Dorsolateral prefrontal cortex (tissue), 120 donors: ENCODE measurements at regions of chr10 and their contacts with region 1.

Region 1: DNA sequence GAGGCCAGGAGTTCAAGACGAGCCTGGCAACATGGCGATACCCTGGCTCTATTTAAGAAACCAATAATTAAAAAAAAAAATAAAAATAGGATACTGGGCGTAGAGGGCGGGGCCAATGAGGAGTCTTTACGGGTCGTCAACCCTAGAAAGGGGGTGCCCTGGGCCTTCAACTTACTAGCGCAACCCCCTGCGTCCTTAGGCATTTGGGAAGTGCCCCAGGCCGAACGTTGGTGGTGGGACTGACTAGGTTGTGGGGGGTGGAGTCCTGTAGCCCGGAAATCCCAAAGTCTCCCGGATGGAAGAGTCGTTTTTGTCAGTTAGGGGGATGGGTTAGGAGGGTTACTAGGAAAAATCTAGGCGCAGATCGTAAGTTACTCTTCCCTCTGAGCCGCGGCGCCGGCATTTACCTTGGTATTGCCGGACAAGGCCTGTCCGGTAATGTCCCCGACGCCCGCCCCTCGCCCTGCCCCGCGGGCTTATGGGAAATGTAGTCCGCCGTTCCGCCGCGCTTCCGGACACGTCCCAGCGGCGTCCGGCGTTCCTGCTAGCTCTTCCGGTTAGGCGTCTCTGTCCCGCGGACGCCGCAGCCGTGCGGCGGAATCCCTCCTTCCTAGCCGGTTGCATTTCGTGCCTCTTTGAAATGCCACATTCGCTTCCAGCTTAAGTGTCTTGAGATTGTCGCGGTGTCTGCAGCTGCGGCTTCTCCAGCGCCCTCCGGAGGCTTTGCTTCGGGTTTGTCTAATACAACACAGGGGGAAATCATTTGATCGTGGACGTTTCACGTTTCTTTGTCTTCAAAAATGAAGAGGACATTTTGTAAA is 1.3 kb upstream of the ACBD5 start:
- DNase-seq: peak; percentile 73 to 93 (median 88)
- H3K4me3 ChIP-seq: peak overlapping the region; percentile 50 to 95 (median 85)
- H3K27ac ChIP-seq: peak overlapping the region; percentile 72 to 99 (median 97)
- H3K27me3 ChIP-seq: no peaks in the 10 kb centered on the region
- CTCF ChIP-seq: peak in 53 of 56 donors; percentile 1 to 67 (median 48)

Region 2: DNA sequence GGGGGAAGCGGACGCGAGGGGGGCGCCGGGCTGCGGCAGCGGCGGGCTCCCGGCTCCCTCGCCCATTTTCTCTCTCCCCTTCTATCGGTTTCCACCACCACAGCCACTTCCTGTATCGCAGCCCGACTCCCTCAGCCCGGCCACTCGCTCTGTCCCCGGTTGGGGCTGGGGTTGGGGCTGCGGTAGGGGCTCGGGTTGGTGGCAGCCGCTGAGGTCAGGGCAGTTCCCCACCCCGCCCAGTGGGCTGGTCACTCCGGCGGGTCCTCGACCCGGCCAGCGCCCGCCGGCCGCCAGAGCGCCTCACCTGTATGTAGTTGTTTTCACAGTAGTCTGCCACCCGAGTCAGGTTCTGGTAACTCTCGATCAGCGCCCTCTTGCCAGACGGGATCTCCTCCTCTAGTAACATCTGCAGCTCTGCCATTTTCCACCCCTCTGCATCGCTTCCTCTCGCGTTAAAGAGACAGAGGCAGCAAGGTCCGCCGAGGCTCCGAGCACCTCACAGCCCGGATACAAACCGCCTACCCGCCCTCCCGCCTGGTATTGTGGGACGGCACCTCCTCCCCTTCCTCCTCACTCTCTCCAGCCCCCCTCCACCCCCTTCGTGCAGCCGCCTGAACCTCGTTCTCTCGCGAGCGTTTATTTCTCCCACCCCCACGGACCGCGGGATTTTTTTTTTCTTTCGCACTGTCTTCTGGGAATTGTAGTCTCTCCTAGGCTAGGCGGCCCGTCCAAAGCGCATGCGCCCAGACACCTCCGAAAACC is 381.2 kb before region 1 on chr10 and contains the start of gene ABI1:
- intact Hi-C with region 1: loop called (anchors 2 to 5 kb)
- DNase-seq: peak; percentile 92 to 97 (median 96)
- H3K4me3 ChIP-seq: peak within 1 kb of the TSS; percentile 55 to 100 (median 95)
- H3K27ac ChIP-seq: peak within 1 kb of the TSS; percentile 58 to 98 (median 93)
- H3K27me3 ChIP-seq: no peaks in the 10 kb centered on the region
- CTCF ChIP-seq: no peak
- total RNA-seq, gene ABI1: 47.5 to 104 (median 81.1) TPM

Region 3: GRCh38 chr10:27099916-27100812 is 141.7 kb before region 1 on chr10 and contains the start of gene ANKRD26:
- intact Hi-C with region 1: loop called (anchors 5 kb)
- DNase-seq: peak; percentile 91 to 96 (median 94)
- H3K4me3 ChIP-seq: peak within 1 kb of the TSS; percentile 64 to 97 (median 86)
- H3K27ac ChIP-seq: peak within 1 kb of the TSS; percentile 55 to 98 (median 91)
- H3K27me3 ChIP-seq: no peaks in the 10 kb centered on the region
- CTCF ChIP-seq: peak in 33 of 56 donors; percentile 4 to 57 (median 37)
- total RNA-seq, gene ANKRD26: 18.9 to 64.2 (median 34.3) TPM

Region 4: GRCh38 chr10:27155066-27155754 is 86.7 kb before region 1 on chr10 and contains the start of gene MASTL:
- intact Hi-C with region 1: loop called (anchors 1 to 2 kb)
- DNase-seq: peak; percentile 82 to 95 (median 90)
- H3K4me3 ChIP-seq: peak within 1 kb of the TSS; percentile 69 to 100 (median 96)
- H3K27ac ChIP-seq: peak within 1 kb of the TSS; percentile 87 to 100 (median 98)
- H3K27me3 ChIP-seq: no peaks in the 10 kb centered on the region
- CTCF ChIP-seq: peak in 5 of 56 donors; percentile 5 to 21 (median 11)
- total RNA-seq, gene MASTL: 2.5 to 7.8 (median 5.4) TPM

Region 5: GRCh38 chr10:27192284-27192683 is 49.6 kb before region 1 on chr10:
- intact Hi-C with region 1: no loop called
- DNase-seq: peak in 3 of 10 donors; percentile 7 to 62 (median 48)
- H3K4me3 ChIP-seq: no peak overlapping the region
- H3K27ac ChIP-seq: peak overlapping the region in 3 of 59 donors; percentile 17 to 33 (median 24)
- H3K27me3 ChIP-seq: no peaks in the 10 kb centered on the region
- CTCF ChIP-seq: no peak

Region 6: DNA sequence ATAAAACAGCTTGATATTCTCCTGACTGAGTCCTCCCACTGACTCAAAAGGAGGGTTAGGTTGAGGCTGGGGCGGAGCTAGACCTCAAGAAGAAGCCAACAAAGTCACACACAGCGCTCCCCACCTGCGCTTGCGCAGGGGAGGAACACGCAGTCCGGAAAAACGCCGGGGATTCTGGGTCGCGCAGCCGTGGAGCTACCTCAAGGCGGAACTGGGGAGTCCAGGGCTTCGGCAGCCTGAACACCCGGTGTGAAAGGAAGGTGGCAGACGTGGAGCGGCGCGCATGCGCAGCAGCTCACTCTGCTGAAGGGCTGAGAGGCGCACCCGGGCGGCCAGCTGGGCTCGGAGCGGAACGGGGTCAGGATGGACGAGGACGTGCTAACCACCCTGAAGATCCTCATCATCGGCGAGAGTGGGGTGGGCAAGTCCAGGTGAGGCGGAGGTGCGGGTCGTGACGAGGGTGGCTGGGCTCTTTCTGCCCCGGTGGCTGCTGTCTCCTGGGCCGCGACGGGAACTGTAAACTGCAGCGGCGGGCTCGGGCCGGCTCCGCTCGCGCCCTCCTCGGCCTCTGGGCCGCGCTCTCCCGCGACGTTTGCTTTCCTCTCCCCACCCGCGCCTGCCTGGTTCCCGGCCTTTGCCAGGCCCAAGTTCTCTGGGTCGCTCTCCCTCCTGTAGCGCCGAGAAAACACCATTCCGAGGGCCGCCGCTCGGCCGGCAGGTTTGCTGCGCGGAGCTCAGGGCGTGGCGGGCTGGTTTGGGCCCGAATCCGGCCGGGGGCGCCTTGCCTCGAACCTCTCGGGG is 262.3 kb after region 1 on chr10 and contains the start of gene RAB18:
- intact Hi-C with region 1: loop called (anchors 5 to 10 kb)
- DNase-seq: peak; percentile 91 to 97 (median 94)
- H3K4me3 ChIP-seq: peak within 1 kb of the TSS; percentile 66 to 97 (median 88)
- H3K27ac ChIP-seq: peak within 1 kb of the TSS; percentile 2 to 95 (median 82)
- H3K27me3 ChIP-seq: no peaks in the 10 kb centered on the region
- CTCF ChIP-seq: peak in 52 of 56 donors; percentile 5 to 70 (median 43)
- total RNA-seq, gene RAB18: 87.4 to 185 (median 148) TPM

Region 7: GRCh38 chr10:28532383-28533175 is 1290.7 kb after region 1 on chr10 and contains the start of gene WAC:
- intact Hi-C with region 1: loop called in 1 of 2 experiments (anchors 10 kb)
- DNase-seq: peak; percentile 83 to 97 (median 92)
- H3K4me3 ChIP-seq: peak within 1 kb of the TSS; percentile 73 to 99 (median 93)
- H3K27ac ChIP-seq: peak within 1 kb of the TSS; percentile 95 to 100 (median 100)
- H3K27me3 ChIP-seq: no peaks in the 10 kb centered on the region
- CTCF ChIP-seq: peak in 24 of 56 donors; percentile 3 to 41 (median 19)
- total RNA-seq, gene WAC: 123 to 241 (median 182) TPM